GM12878 (cell line): ENCODE measurements at regions of chr4 and their contacts with region 1.

Region 1: DNA sequence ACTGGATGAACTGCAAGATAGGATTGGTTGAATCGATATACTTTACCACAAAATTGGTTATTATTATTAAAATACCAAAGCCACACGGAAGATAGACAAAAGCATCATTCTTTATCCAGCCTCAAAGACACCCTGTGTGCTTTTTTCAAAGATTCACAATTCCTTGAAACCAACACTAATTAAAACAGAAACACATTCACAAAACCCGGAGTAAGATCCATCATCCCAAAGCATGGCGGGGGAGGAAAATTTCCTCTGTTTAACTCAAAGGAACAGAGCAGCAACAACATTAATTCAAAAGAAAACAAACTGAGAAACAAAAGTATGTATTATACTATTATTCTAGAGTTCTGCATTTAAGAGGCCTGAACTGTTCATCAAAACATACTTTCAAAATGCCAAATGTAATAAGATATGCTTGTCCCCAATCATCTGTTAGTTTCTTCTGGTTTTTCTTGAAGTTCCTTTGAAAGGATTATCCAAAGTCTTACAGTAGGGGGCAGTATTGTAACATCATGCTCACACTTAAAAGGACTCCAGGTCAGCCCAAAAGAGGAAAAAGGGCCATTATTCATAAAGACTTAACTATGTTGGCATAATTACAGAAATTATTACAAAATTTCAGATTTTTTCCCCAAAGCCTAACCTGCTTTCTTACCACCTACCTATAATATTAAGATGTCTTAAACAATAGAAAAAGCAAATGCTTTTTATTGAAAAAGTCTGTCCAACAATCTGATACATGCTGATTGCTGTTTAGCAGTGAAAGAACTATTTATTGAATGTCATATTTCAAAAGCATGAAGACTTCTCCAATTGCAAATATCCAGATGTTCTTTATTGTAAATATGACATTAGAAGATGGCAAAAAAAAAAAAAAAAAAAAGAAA is 168.7 kb downstream of the SCFD2 start:
- DNase-seq: peak; percentile 44
- ATAC-seq: peak; percentile 85
- H3K4me3 ChIP-seq: no peak overlapping the region
- H3K27ac ChIP-seq: no peak overlapping the region
- H3K4me1 ChIP-seq: no peaks in the 10 kb centered on the region
- H3K27me3 ChIP-seq: no peaks in the 10 kb centered on the region
- CTCF ChIP-seq: peak; percentile 53 to 75 (median 64); a peak in 5 of 6 replicates
- EP300 ChIP-seq: no peak
- POLR2A ChIP-seq: no peak
- RAD21 ChIP-seq: peak; percentile 94

Region 2: GRCh38 chr4:52081216-52081615 is 1115.9 kb before region 1 on chr4:
- CTCF ChIA-PET with region 1: no interaction called
- POLR2A ChIA-PET with region 1: no interaction called
- RAD21 ChIA-PET with region 1: no interaction called
- SMC1A ChIA-PET with region 1: no interaction called
- in situ Hi-C with region 1: no loop called
- intact Hi-C with region 1: no loop called
- DNase-seq: no peak
- ATAC-seq: no peak
- H3K4me3 ChIP-seq: no peak overlapping the region
- H3K27ac ChIP-seq: no peak overlapping the region
- H3K4me1 ChIP-seq: no peaks in the 10 kb centered on the region
- H3K27me3 ChIP-seq: peaks cover 0 to 3% of the 10 kb centered on the region in 2 experiments; a peak in 2 of 4 replicates
- CTCF ChIP-seq: no peak
- EP300 ChIP-seq: no peak
- POLR2A ChIP-seq: no peak
- RAD21 ChIP-seq: no peak

Region 3: GRCh38 chr4:52926196-52926974 is 270.7 kb before region 1 on chr4:
- CTCF ChIA-PET with region 1: no interaction called
- POLR2A ChIA-PET with region 1: no interaction called
- RAD21 ChIA-PET with region 1: no interaction called
- SMC1A ChIA-PET with region 1: no interaction called
- in situ Hi-C with region 1: no loop called
- intact Hi-C with region 1: no loop called
- DNase-seq: no peak
- ATAC-seq: no peak
- H3K4me3 ChIP-seq: no peak overlapping the region
- H3K27ac ChIP-seq: no peak overlapping the region
- H3K4me1 ChIP-seq: no peaks in the 10 kb centered on the region
- H3K27me3 ChIP-seq: no peaks in the 10 kb centered on the region
- CTCF ChIP-seq: no peak
- EP300 ChIP-seq: no peak
- POLR2A ChIP-seq: no peak
- RAD21 ChIP-seq: no peak

Region 4: GRCh38 chr4:53015681-53016080 is 181.4 kb before region 1 on chr4:
- CTCF ChIA-PET with region 1: interaction called, 3 read pairs
- POLR2A ChIA-PET with region 1: no interaction called
- RAD21 ChIA-PET with region 1: interaction called, 8 read pairs
- SMC1A ChIA-PET with region 1: interaction called, 3 read pairs
- in situ Hi-C with region 1: no loop called
- intact Hi-C with region 1: loop called (anchors 2 kb)
- DNase-seq: no peak
- ATAC-seq: 0 out of 3 replicates have a peak, but pooled peaks have one; percentile 25
- H3K4me3 ChIP-seq: no peak overlapping the region
- H3K27ac ChIP-seq: no peak overlapping the region
- H3K4me1 ChIP-seq: peaks cover 8% of the 10 kb centered on the region; the same call in 1 of the 2 replicates
- H3K27me3 ChIP-seq: no peaks in the 10 kb centered on the region
- CTCF ChIP-seq: peak; percentile 47 to 67 (median 55)
- EP300 ChIP-seq: no peak
- POLR2A ChIP-seq: no peak
- RAD21 ChIP-seq: peak; percentile 83

Region 5: GRCh38 chr4:53377319-53378170 is 180.4 kb after region 1 on chr4 and contains the start of gene FIP1L1:
- CTCF ChIA-PET with region 1: interaction called, 3 read pairs
- POLR2A ChIA-PET with region 1: no interaction called
- RAD21 ChIA-PET with region 1: interaction called, 3 read pairs
- SMC1A ChIA-PET with region 1: no interaction called
- in situ Hi-C with region 1: no loop called
- intact Hi-C with region 1: loop called (anchors 5 kb)
- DNase-seq: peak; percentile 78
- ATAC-seq: peak; percentile 92
- H3K4me3 ChIP-seq: peak within 1 kb of the TSS; percentile 89
- H3K27ac ChIP-seq: peak within 1 kb of the TSS; percentile 84
- H3K4me1 ChIP-seq: no peaks in the 10 kb centered on the region
- H3K27me3 ChIP-seq: no peaks in the 10 kb centered on the region
- CTCF ChIP-seq: no peak
- EP300 ChIP-seq: no peak
- POLR2A ChIP-seq: peak; percentile 92
- RAD21 ChIP-seq: no peak
- polyA plus RNA-seq, gene FIP1L1: 28.1 to 40.8 TPM

Region 6: GRCh38 chr4:53459548-53459947 is 262.4 kb after region 1 on chr4:
- CTCF ChIA-PET with region 1: no interaction called
- POLR2A ChIA-PET with region 1: no interaction called
- RAD21 ChIA-PET with region 1: no interaction called
- SMC1A ChIA-PET with region 1: interaction called, 3 read pairs
- in situ Hi-C with region 1: no loop called
- intact Hi-C with region 1: loop called (anchors 5 kb)
- DNase-seq: no peak
- ATAC-seq: no peak
- H3K4me3 ChIP-seq: no peak overlapping the region
- H3K27ac ChIP-seq: no peak overlapping the region
- H3K4me1 ChIP-seq: no peaks in the 10 kb centered on the region
- H3K27me3 ChIP-seq: no peaks in the 10 kb centered on the region
- CTCF ChIP-seq: no peak
- EP300 ChIP-seq: no peak
- POLR2A ChIP-seq: no peak
- RAD21 ChIP-seq: no peak

Region 7: DNA sequence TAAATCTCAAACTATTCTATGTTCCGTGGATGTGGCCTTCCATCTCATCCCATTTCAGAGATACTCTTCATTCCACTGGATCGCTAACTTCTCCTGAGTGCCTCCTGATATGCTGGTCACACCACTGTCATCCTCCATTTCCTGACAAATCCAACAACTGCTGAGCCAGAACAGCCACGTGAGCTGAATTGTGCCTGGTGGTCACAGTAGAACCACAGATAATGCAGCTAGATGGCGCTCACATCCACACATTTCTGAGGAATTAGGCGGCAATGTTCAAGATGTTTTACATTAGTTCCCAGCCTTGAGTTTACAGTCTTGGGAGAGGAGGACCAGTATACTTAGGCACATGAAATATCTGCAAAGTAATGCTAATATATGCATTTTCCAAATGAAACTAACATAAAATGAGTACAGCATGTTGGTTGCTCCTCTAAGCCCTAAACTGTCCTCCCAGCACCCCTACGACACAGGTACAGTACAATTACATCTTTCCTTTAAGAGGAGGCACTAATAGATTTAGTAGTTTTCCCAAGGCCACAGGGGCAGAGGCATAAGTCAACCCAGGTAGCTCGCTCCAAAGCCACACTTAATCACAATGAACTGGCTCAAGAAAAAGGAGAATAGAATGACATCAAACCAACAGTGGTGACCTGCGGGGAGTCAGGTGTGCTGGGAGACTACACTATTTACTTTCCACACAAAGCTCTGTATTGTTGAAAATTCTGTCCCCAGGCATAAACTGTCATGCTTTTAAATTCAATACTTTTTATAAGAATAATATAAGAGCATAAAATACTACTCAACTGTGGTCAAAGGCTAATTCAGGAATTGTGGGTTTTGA is 733.0 kb after region 1 on chr4:
- CTCF ChIA-PET with region 1: interaction called, 4 read pairs
- POLR2A ChIA-PET with region 1: no interaction called
- RAD21 ChIA-PET with region 1: no interaction called
- SMC1A ChIA-PET with region 1: no interaction called
- in situ Hi-C with region 1: loop called (anchors 10 kb)
- intact Hi-C with region 1: no loop called
- DNase-seq: peak; percentile 13
- ATAC-seq: peak; percentile 87
- H3K4me3 ChIP-seq: no peak overlapping the region
- H3K27ac ChIP-seq: no peak overlapping the region
- H3K4me1 ChIP-seq: no peaks in the 10 kb centered on the region
- H3K27me3 ChIP-seq: no peaks in the 10 kb centered on the region; a peak in 1 of 4 replicates
- CTCF ChIP-seq: peak; percentile 63 to 78 (median 65)
- EP300 ChIP-seq: no peak
- POLR2A ChIP-seq: no peak
- RAD21 ChIP-seq: peak; percentile 91

Region 8: GRCh38 chr4:54233277-54233696 is 1036.2 kb after region 1 on chr4:
- CTCF ChIA-PET with region 1: interaction called, 16 read pairs
- POLR2A ChIA-PET with region 1: no interaction called
- RAD21 ChIA-PET with region 1: interaction called, 11 read pairs
- SMC1A ChIA-PET with region 1: interaction called, 4 read pairs
- in situ Hi-C with region 1: loop called (anchors 5 kb)
- intact Hi-C with region 1: loop called (anchors 2 kb)
- DNase-seq: no peak
- ATAC-seq: peak; percentile 97
- H3K4me3 ChIP-seq: peak overlapping the region; percentile 63; the same call in 1 of the 2 replicates
- H3K27ac ChIP-seq: no peak overlapping the region
- H3K4me1 ChIP-seq: 0 out of 2 replicates have a peak, but pooled peaks cover 7% of the 10 kb centered on the region
- H3K27me3 ChIP-seq: peaks cover 18 to 22% of the 10 kb centered on the region in 2 experiments
- CTCF ChIP-seq: peak; percentile 74 to 84 (median 83)
- EP300 ChIP-seq: no peak
- POLR2A ChIP-seq: no peak
- RAD21 ChIP-seq: peak; percentile 73